ENCODE measurements at regions of chr3 and their contacts with region 1.

Region 1: DNA sequence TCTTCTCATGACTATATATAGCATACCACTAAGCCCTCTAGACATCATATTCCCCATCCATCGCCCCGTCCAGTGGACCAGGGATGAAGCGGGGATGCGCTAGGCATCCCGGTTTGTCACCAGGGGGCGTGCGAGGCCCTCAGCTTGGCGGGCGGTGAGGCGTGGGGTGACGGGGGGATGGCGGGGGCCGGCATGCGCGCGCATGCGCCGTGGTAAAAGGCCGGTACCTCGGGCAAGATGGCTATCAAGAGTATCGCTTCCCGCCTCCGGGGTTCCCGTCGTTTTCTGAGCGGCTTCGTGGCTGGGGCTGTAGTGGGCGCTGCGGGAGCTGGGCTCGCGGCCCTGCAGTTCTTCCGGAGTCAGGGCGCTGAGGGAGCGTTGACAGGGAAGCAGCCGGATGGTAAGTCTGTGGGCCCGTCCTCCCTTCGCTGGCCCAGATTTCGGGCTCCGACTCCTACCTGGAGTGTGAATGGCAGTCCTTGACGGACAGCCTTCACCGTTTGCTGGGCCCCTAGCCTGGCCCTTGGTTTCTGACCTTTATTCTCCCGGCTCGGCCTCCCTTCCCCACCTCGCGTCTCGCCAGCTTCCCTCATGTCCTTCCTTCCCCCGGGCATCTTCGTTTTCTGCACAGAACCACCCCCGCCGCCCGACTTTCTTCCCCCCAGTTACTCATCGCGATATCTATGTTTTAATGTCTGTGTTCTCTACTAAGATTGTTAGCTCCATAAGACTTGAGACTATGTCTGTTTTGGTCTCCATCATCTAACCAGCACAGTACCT is at the start of gene EXOG:
- DNase-seq: peak; percentile 97
- H3K4me3 Mint-ChIP-seq: peak within 1 kb of the TSS; percentile 99
- H3K27ac Mint-ChIP-seq: peak within 1 kb of the TSS; percentile 86
- H3K4me1 Mint-ChIP-seq: peaks cover 23% of the 10 kb centered on the region
- H3K27me3 Mint-ChIP-seq: no peaks in the 10 kb centered on the region
- total RNA-seq, gene EXOG: 18.0 and 20.8 TPM in 2 replicates

Region 2: DNA sequence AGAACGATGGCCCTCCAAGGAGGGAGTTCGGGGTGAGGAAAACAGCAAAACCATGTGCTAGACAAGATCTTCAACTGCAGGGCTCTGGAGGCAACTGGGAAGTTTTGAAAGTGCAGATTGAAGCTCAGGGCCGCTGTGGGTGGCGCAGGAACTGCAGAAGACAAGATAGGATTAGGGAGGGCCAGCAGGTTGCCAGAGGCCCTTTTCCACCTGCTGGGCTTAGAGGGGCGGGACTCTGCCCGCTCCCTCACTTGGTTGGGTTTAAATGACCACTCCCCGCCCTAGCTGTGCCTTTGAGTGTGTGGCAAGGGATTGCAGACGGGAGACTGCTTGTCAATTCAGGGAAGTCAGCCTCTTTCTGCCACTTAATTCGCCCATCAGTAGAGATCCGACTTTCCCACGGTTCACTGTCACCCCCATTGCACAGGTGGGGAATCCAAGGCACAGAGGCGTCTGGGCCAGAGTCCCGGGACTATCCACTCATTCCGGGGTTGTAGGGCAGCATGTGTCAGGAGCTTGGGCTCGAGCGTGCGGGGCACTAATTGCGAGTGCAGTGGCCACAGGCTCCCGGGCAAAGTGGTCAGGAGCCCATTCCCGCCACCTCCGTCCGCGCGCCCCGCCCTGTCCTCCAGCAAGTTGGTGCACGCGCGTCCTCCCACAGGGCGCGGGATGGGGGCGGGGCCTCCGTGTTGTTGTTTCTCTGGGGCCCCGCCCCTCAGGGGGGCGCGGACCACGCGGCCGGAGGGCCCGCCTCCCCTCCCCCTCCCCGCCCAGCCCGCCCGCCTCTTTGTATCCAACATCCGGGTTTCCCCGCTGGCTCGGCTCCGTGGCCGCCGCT is 43.0 kb before region 1 on chr3 and contains the start of gene ACVR2B:
- intact Hi-C with region 1: loop called (anchors 1 kb)
- DNase-seq: peak; percentile 93
- H3K4me3 Mint-ChIP-seq: peak within 1 kb of the TSS; percentile 99
- H3K27ac Mint-ChIP-seq: peak within 1 kb of the TSS; percentile 92
- H3K4me1 Mint-ChIP-seq: peaks cover 19% of the 10 kb centered on the region
- H3K27me3 Mint-ChIP-seq: peaks cover 24% of the 10 kb centered on the region
- total RNA-seq, gene ACVR2B: 12.2 and 12.6 TPM in 2 replicates

Region 3: DNA sequence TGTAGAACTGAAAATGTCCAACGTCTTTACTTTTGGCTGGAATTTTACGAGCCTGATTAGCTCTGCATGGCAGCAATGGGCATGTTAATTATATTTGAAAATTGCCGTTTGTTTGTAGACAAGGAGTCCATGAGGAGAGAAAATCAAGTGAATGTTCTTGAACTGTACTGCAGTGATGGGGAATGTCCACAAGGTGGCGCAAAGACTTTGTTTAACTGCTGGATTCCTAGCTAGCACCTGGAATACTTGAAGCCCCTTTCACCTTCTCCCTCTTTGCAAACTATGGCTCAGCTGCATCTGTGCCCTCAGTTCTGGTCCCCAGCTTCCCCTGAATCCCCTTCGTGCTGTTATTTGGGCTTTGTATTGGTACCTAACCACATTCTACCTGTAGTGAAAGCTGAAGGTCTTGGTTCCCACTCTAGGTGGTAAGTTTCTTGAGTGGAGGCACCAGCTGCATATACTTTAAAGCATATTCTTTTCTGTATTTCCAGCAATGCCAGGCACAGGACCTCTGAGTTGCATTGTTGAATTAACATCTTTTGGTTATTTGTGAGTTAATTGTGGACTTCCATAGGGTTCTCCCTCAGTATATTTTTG is 25.2 kb after region 1 on chr3:
- intact Hi-C with region 1: loop called (anchors 2 kb)
- DNase-seq: peak; percentile 87
- H3K4me3 Mint-ChIP-seq: no peak overlapping the region
- H3K27ac Mint-ChIP-seq: no peak overlapping the region
- H3K4me1 Mint-ChIP-seq: peaks cover 25% of the 10 kb centered on the region
- H3K27me3 Mint-ChIP-seq: no peaks in the 10 kb centered on the region

Region 4: DNA sequence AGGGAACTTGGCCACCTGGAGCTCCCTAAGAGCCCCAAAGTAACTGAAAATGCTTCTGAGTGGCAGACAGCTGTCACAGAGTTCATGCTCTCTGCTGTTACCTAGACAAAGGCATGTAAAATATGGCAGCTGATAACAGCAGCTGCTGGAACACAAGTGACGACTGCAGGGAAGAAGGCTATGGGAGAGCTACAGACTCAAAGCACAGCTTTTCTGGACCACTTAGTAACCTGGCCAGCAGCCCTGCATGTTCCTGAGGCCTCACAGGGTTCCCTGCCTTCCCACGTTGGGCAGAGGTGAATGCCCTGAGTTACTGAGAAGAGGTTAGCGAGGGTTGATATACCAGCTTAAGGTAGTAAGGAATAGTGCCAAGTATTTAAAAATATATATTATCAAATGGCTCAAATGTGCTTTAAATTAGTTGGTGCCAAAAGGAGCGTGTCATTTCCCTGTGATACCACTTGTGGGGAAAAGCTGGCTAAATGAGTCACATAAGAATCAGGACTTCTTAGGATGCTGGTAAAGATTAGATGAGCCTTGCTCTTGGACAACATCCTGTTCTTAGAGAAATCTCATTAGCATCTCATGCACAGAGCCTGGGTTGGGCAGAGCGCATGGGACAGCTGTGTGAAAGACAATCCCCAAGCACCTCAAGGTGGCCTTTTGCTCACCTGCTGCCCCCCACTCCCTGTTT is 229.6 kb after region 1 on chr3:
- intact Hi-C with region 1: no loop called
- DNase-seq: no peak
- H3K4me3 Mint-ChIP-seq: no peak overlapping the region
- H3K27ac Mint-ChIP-seq: no peak overlapping the region
- H3K4me1 Mint-ChIP-seq: no peaks in the 10 kb centered on the region
- H3K27me3 Mint-ChIP-seq: peaks cover 2% of the 10 kb centered on the region

Region 5: GRCh38 chr3:39107388-39108199 is 611.3 kb after region 1 on chr3 and contains the starts of genes GORASP1 and TTC21A:
- intact Hi-C with region 1: no loop called
- DNase-seq: peak; percentile 91
- H3K4me3 Mint-ChIP-seq: peak within 1 kb of the TSS; percentile 92
- H3K27ac Mint-ChIP-seq: peak within 1 kb of the TSS; percentile 89
- H3K4me1 Mint-ChIP-seq: peaks cover 49% of the 10 kb centered on the region
- H3K27me3 Mint-ChIP-seq: no peaks in the 10 kb centered on the region
- total RNA-seq, gene GORASP1: 31.5 and 32.1 TPM in 2 replicates
- total RNA-seq, gene TTC21A: 0.54 and 0.89 TPM in 2 replicates